ENCODE measurements at regions of chr5 and their contacts with region 1.

Region 1: GRCh38 chr5:42583322-42583721 is 160.1 kb downstream of the GHR start:
- DNase-seq: peak; percentile 58
- ATAC-seq: peak; percentile 88
- H3K4me3 Mint-ChIP-seq: no peak overlapping the region
- H3K27ac Mint-ChIP-seq: no peak overlapping the region
- H3K4me1 Mint-ChIP-seq: peaks cover 4% of the 10 kb centered on the region
- H3K27me3 Mint-ChIP-seq: no peaks in the 10 kb centered on the region
- CTCF ChIP-seq: peak; percentile 61

Region 2: GRCh38 chr5:42423285-42424165 is 159.8 kb before region 1 on chr5 and contains the start of gene GHR:
- CTCF ChIA-PET with region 1: interaction called, 45 read pairs
- POLR2A ChIA-PET with region 1: interaction called, 3 read pairs
- DNase-seq: peak; percentile 86
- ATAC-seq: peak; percentile 91
- H3K4me3 Mint-ChIP-seq: no peak within 1 kb of the TSS
- H3K27ac Mint-ChIP-seq: no peak within 1 kb of the TSS
- H3K4me1 Mint-ChIP-seq: no peaks in the 10 kb centered on the region
- H3K27me3 Mint-ChIP-seq: no peaks in the 10 kb centered on the region; the same call in 1 of the 2 replicates
- CTCF ChIP-seq: peak; percentile 57
- total RNA-seq, gene GHR: 0.48 to 0.57 TPM (median 0.53 TPM) in 3 replicates

Region 3: DNA sequence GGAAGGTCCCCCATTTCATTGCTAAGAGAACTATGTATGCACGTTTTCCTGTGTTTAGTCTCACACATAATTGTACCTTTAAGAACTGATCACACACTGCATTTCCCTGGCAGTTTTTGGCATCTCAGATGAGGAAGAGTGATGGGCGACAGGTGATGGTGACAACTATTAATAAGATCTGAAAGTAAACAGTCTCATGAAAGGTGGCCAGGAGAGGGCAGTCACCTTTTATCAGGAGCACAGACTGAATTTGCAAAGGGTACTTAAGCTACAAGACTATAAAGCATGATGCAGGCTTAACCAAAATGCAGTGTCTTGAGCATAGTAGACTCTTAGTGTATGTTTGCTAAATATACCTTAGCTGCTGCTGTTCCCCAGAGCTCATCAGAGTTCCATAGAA is 68.6 kb before region 1 on chr5:
- CTCF ChIA-PET with region 1: interaction called, 30 read pairs
- POLR2A ChIA-PET with region 1: no interaction called
- DNase-seq: no peak
- ATAC-seq: peak; percentile 82
- H3K4me3 Mint-ChIP-seq: no peak overlapping the region
- H3K27ac Mint-ChIP-seq: no peak overlapping the region
- H3K4me1 Mint-ChIP-seq: peaks cover 16% of the 10 kb centered on the region
- H3K27me3 Mint-ChIP-seq: no peaks in the 10 kb centered on the region
- CTCF ChIP-seq: no peak

Region 4: DNA sequence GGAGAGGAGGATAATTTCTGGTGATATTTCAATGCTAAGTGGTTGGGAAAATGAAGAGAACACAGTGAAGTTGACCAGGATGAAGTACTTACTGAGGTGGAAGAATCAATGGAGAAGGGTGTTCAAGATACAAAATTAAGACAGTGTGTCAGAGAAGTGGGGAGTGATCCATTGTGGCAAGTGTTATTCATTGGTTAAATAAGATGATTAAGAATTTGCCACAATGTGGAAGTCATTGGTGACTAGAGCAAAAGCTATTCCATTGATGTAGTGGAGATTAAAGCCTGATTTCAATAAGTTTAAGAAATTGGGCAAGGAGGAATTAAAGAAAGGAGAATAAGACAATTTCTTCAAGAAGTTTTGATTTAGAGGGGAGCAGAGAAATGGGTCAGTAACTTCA is 41.2 kb before region 1 on chr5:
- CTCF ChIA-PET with region 1: no interaction called
- POLR2A ChIA-PET with region 1: no interaction called
- DNase-seq: no peak
- ATAC-seq: no peak
- H3K4me3 Mint-ChIP-seq: no peak overlapping the region
- H3K27ac Mint-ChIP-seq: no peak overlapping the region
- H3K4me1 Mint-ChIP-seq: no peaks in the 10 kb centered on the region
- H3K27me3 Mint-ChIP-seq: no peaks in the 10 kb centered on the region
- CTCF ChIP-seq: no peak

Region 5: GRCh38 chr5:42566652-42567295 is 16.5 kb before region 1 on chr5:
- CTCF ChIA-PET with region 1: interaction called, 16 read pairs
- POLR2A ChIA-PET with region 1: no interaction called
- DNase-seq: no peak
- ATAC-seq: no peak
- H3K4me3 Mint-ChIP-seq: no peak overlapping the region
- H3K27ac Mint-ChIP-seq: no peak overlapping the region
- H3K4me1 Mint-ChIP-seq: peaks cover 5% of the 10 kb centered on the region; the same call in 1 of the 2 replicates
- H3K27me3 Mint-ChIP-seq: no peaks in the 10 kb centered on the region
- CTCF ChIP-seq: no peak

Region 6: GRCh38 chr5:43203373-43203772 is 620.1 kb after region 1 on chr5:
- CTCF ChIA-PET with region 1: no interaction called
- POLR2A ChIA-PET with region 1: no interaction called
- DNase-seq: no peak
- ATAC-seq: no peak
- H3K4me3 Mint-ChIP-seq: no peak overlapping the region
- H3K27ac Mint-ChIP-seq: no peak overlapping the region
- H3K4me1 Mint-ChIP-seq: peaks cover 4% of the 10 kb centered on the region; the same call in 1 of the 2 replicates
- H3K27me3 Mint-ChIP-seq: peaks cover 3% of the 10 kb centered on the region
- CTCF ChIP-seq: no peak